BJ (cell line): ENCODE measurements at regions of chr3 and their contacts with region 1.

Region 1: DNA sequence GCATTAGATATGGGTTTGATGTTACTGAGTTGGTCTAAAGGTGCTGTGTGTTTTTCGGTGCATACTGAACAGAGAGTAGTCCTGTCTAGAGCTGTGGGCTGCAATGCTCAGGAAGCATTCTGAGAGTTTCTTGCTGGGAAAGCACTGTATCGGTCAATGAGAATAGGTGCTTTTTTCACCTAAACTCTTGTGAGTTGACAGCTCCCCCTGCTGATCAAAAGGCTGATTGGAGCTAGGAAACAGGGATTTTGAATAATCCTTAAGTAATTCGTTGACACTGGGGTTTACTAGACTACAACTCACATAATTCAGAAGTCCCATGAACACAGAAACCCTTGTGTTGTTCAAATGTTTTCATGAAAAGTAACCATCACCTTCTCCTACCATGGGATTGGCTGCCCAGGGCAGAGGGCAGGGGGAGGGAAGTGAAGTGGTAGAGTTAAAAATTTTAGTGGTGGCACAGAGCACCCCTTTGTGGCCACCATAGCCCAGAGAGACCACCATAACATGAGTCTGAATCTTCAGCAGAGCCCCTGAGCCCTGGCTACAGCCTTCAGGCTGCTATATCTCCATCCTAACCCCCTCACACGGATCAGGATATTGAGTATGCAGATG is 13.0 kb upstream of the MANF start:
- DNase-seq: peak; percentile 5
- H3K4me3 ChIP-seq: no peak overlapping the region
- H3K27me3 ChIP-seq: no peaks in the 10 kb centered on the region; the same call in 1 of the 2 replicates
- CTCF ChIP-seq: peak; percentile 79

Region 2: GRCh38 chr3:50971487-50971924 is 400.5 kb before region 1 on chr3:
- CTCF ChIA-PET with region 1: interaction called, 12 read pairs
- POLR2A ChIA-PET with region 1: no interaction called
- DNase-seq: no peak
- H3K4me3 ChIP-seq: no peak overlapping the region
- H3K27me3 ChIP-seq: no peaks in the 10 kb centered on the region
- CTCF ChIP-seq: peak; percentile 88

Region 3: DNA sequence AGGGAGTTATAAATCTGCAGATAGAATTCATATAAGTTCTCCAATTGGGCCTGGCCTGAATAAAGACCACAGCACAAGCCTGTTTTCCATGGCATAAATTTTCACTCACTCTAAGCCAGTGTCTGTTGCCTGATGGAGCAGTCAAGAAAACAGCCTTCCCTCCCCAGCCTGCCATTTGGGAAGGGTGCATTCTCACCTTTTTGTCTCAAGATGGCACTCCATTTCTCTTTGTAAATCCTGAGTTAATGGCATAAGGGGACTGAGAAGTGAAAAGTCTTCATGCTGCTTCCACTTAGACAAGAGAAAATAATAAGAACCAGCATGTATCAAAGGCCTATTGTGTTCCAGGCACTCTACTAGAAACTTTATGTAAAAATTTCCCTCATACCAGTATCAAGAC is 102.6 kb before region 1 on chr3:
- CTCF ChIA-PET with region 1: interaction called, 10 read pairs
- POLR2A ChIA-PET with region 1: no interaction called
- DNase-seq: no peak
- H3K4me3 ChIP-seq: no peak overlapping the region
- H3K27me3 ChIP-seq: no peaks in the 10 kb centered on the region
- CTCF ChIP-seq: peak; percentile 25; the same call in 1 of the 2 replicates